Transverse colon (tissue), 4 donors: ENCODE measurements at regions of chr10 and their contacts with region 1.

Region 1: DNA sequence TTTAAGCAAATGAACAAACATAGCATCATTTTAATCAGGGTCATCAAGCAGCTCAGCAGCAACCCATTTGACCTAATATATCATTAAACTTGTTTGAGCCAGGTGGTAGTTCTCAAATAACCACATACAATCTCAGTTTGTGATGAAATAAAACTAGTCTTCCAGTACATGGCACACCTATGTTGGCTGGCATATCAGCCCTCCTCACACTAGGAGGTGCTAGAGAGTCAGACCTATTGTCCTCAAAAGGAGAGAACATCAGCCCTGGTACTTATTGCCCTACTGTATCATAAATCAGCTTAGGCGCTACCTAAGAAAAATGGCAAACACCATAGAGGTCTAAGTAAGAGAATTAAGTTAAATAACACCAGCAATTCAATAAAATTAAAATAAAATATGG is 81.7 kb downstream of the CABCOCO1 start:
- DNase-seq: no peak
- H3K4me3 ChIP-seq: no peak overlapping the region
- H3K27ac ChIP-seq: no peak overlapping the region
- H3K4me1 ChIP-seq: no peaks in the 10 kb centered on the region
- H3K27me3 ChIP-seq: no peaks in the 10 kb centered on the region
- CTCF ChIP-seq: no peak
- EP300 ChIP-seq: no peak
- POLR2A ChIP-seq: no peak

Region 2: DNA sequence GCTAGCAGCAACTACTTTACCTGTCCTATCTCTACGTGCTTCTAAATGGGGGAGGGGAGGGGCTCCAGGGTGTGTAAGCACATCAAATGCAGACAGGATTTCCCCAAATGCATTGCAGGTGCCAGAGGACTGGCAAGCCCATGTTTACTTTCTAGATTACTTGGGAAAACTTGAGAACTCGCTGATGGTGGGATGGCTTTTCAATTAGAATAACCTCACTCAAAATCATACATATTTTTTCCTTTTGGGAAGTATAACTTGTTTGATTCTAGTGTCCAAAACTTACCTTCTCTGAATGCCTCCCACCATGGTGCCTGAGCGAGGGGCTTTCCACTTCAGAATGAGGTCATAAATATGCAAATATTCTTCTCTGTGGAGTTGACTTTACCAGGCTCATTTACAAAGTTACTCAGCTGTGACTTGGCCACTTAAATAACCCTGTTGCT is 609.2 kb before region 1 on chr10:
- in situ Hi-C with region 1: loop called in 2 of 4 experiments (anchors 25 kb)
- intact Hi-C with region 1: loop called (anchors 10 kb)
- DNase-seq: no peak
- H3K4me3 ChIP-seq: no peak overlapping the region
- H3K27ac ChIP-seq: no peak overlapping the region
- H3K4me1 ChIP-seq: no peaks in the 10 kb centered on the region
- H3K27me3 ChIP-seq: no peaks in the 10 kb centered on the region
- CTCF ChIP-seq: no peak
- EP300 ChIP-seq: no peak
- POLR2A ChIP-seq: no peak

Region 3: DNA sequence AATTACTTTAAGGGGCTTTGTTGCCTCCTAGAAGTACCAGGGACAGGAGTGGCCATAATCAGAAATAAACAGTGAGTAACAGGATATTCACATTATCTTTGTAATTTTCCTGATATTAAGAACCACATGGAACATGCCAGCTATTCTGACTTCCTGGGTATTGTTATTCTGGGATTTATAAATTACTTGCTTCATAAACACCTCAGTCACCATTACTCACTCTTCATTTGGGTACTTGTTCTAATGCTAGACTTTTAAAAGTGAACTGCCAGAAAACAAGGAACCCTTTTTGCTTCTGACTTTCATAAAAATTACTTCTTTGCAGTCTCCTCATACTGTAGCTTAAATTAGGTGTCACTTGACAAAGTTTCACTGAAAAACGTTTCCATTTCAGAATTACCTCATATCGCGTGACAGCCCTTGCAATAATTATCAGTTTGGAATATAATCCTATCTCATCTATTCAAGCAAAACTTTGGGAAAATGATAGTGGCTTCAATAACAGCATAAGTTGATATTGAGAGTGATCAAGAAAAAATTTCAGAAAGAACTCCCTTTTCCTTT is 51.9 kb before region 1 on chr10:
- in situ Hi-C with region 1: no loop called
- intact Hi-C with region 1: no loop called
- DNase-seq: no peak
- H3K4me3 ChIP-seq: no peak overlapping the region
- H3K27ac ChIP-seq: no peak overlapping the region
- H3K4me1 ChIP-seq: no peaks in the 10 kb centered on the region
- H3K27me3 ChIP-seq: no peaks in the 10 kb centered on the region
- CTCF ChIP-seq: no peak
- EP300 ChIP-seq: no peak
- POLR2A ChIP-seq: no peak